Activated T-helper 2 cell treated with anti-CD3 and anti-CD28 coated beads, Interferon-gamma antibody, Interleukin-2, Interleukin-4, amounts not matched to agents 10 μg/mL and 5 μg/mL and 100 μg/mL, durations not matched to agents 14 hours and 24 hours and 36 hours (primary cell): ENCODE measurements at regions of chr10 and their contacts with region 1.

Region 1: DNA sequence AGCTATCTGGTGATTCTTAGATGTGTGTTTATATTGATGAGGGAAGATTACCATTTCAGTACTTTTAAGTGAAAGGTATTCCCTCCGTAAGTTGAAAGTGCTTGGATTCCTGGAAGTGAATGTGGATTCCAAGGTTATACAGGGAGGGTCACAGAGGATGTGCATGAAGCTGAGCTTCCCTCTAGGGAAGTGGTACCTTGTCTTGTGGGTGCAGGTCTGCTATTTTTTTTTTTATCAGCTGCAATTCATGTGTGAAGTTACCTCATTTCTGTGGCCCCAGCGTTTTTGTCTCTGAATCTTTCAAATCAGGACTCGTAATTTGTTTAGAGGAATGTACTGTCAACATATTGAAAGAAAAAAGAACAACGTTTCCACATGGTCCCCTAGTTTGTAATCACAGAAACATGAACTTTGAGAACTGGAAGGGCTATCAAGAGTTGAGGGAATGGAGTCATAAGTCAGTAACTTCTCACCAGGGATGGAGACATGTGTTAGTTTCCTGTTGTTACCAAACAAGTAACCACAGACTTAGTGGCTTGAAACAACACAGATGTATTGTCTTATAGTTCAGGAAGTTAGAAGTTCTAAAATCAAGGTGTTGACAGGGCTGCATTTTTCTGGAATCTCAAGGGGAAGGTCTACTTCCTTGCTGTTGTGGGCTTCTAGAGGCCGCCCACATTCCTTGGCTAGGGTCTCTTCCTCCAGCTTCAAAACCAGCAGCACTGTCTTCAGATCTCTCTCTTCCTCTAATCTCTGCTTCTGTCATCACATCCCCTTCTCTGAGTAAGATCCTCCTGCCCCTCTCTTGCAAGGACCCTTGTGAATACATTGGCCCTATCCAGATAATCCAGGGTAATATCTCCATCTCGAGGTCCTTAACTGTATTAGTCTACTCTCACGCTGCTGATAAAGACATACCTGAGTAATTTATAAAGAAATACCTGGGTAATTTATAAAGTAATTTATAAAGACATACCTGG is 64.4 kb downstream of the RAB18 start:
- DNase-seq: no peak
- H3K4me3 Mint-ChIP-seq: no peak overlapping the region
- H3K27ac Mint-ChIP-seq: no peak overlapping the region
- H3K4me1 Mint-ChIP-seq: peaks cover 23% of the 10 kb centered on the region
- H3K27me3 Mint-ChIP-seq: peaks cover 10% of the 10 kb centered on the region

Region 2: GRCh38 chr10:28179006-28179742 is 610.7 kb after region 1 on chr10:
- intact Hi-C with region 1: loop called (anchors 10 kb)
- DNase-seq: peak; percentile 18
- H3K4me3 Mint-ChIP-seq: no peak overlapping the region
- H3K27ac Mint-ChIP-seq: peak overlapping the region; percentile 87
- H3K4me1 Mint-ChIP-seq: peaks cover 20% of the 10 kb centered on the region
- H3K27me3 Mint-ChIP-seq: peaks cover 6% of the 10 kb centered on the region